ENCODE measurements at regions of chr2 and their contacts with region 1.

Region 1: DNA sequence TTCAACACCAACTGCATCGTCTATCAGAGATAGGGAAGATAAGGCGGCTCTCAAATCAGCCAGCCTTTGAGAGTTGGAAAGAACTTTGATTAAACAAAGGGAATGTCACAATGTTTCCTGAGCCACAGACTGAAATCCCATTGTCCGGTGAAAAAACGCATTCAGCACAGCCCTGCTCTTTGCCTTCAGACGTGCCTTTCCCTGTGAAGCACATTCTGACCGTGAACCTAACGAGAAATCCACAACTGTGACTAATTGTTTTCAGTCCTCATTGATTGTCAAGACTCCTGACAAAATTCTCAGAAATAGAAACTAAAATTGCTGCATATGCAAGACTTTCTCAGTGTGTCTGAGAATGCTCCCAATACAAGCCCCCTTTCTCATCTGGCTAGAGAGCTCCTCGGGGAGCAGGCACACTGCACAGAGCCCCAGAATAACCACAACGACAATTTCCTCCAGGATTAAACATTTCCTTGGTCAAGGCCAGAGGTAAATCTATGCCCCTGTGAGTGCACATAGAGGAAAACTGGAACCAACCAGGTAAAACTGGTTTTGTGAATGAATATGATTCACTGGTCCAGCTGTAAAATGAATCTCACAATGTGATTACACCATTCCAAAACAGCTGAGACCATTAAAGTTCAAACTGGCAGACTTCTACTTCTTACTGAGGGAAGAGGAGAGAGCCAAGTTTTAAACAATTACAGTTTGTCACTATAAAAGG is 561.9 kb upstream of the ID2 start:
- DNase-seq: peak; percentile 83
- H3K4me3 ChIP-seq: peak overlapping the region in 1 of 3 experiments; percentile 2
- H3K27ac ChIP-seq: peak overlapping the region; percentile 51
- H3K4me1 ChIP-seq: peaks cover 25% of the 10 kb centered on the region
- H3K27me3 ChIP-seq: no peaks in the 10 kb centered on the region
- CTCF ChIP-seq: no peak

Region 2: DNA sequence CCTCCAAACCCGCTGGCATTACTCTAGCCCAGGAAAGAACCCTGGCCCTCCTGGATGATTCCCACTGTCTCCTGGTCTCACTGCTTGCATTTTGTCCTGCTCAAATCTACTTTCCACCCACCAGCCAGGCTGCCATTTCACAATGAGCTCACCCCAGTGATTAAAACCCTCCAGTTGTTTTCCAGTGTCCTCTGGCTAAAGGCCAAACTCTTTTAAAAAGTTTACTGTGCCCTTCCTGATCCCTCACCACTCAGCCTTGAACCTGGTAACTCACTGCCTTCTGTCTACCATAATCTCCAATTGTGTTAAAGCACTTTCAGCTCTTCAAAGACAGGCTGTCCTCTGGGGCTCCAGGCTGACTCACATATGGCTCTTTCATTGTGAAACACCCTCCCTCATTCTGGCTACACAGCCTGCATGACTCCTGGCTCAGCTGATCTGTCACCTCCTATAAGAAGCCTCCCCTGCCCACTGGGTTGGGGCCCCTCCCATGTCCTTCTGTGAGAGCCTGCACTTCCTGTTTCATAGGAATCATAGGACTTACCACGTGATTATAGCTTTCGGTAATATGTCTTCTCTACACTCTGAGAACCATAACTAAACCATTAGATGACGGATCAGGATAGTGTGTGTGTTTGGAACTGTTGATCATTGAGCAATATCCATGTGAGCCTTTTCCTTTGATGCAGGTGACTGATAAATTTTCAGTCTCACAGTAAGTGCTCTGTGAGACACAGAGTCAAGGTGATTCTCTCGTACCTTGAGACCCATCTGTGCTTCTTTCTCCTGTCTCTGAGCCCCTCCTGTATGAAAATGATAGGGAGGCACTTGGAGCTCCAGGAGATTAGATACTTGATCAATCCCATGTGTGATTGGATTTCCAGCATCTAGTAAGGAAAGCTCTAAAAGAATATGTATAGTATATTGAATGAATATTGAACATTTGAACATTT is 28.9 kb before region 1 on chr2:
- CTCF ChIA-PET with region 1: no interaction called
- dilution Hi-C with region 1: no loop called
- in situ Hi-C with region 1: no loop called
- intact Hi-C with region 1: loop called (anchors 1 kb)
- DNase-seq: peak; percentile 89
- H3K4me3 ChIP-seq: no peak overlapping the region
- H3K27ac ChIP-seq: no peak overlapping the region
- H3K4me1 ChIP-seq: peaks cover 35% of the 10 kb centered on the region
- H3K27me3 ChIP-seq: no peaks in the 10 kb centered on the region
- CTCF ChIP-seq: no peak

Region 3: DNA sequence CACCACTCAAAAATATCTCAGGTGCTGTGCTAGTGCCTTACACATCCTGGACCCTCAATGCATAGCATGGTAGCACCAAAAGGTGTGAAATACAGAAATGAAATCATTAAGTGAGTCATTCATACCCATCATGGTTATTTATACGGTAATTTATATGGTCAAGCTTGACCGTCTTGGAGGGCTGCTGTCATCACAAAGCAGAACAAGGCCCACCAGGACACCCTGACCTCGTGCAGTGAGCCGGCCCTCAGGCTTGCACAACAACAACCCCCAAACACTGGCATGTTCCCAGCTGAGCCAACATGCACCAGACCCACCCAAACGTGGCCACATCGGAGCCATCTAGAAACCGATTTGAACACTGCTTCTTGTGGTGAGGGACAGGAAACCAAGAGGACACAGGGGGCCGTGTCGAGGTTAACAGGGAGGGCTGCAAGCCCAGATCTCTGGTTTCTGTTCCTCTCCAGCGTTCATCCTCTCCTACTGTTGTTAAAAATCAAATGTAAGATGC is 183.4 kb after region 1 on chr2:
- CTCF ChIA-PET with region 1: no interaction called
- dilution Hi-C with region 1: no loop called
- in situ Hi-C with region 1: no loop called
- intact Hi-C with region 1: no loop called
- DNase-seq: no peak
- H3K4me3 ChIP-seq: no peak overlapping the region
- H3K27ac ChIP-seq: no peak overlapping the region
- H3K4me1 ChIP-seq: no peaks in the 10 kb centered on the region
- H3K27me3 ChIP-seq: no peaks in the 10 kb centered on the region
- CTCF ChIP-seq: no peak

Measured in mammary epithelial cell (primary cell).